GM12878 (cell line): ENCODE measurements at regions of chr15 and their contacts with region 1.

Region 1: GRCh38 chr15:58924327-58924726 is 9.2 kb downstream of the SLTM start:
- DNase-seq: no peak
- ATAC-seq: no peak
- H3K4me3 ChIP-seq: peak overlapping the region; percentile 7; the same call in 1 of the 2 replicates
- H3K27ac ChIP-seq: peak overlapping the region; percentile 14; the same call in 1 of the 2 replicates
- H3K4me1 ChIP-seq: peaks cover 2% of the 10 kb centered on the region; the same call in 1 of the 2 replicates
- H3K27me3 ChIP-seq: no peaks in the 10 kb centered on the region
- CTCF ChIP-seq: no peak
- EP300 ChIP-seq: no peak
- POLR2A ChIP-seq: no peak
- RAD21 ChIP-seq: no peak

Region 2: DNA sequence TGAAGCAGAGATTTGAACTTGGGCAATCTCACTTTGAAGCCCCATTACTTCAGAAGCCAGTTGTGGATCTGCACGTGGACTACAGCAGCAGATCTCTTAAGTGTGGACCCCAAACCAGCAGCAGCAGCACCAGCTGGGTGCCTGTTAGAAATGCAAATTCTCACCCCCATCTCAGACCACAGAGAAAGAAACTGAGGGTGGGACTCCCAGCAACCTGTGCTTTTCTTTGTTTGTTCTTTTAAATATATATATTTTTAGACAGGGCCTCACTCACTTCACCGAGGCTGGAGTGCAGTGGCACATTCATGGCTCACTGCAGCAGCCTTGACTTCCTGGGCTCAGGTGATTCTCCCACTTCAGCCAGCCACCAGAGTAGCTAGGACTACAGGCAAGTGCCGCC is 44.0 kb before region 1 on chr15:
- CTCF ChIA-PET with region 1: no interaction called
- POLR2A ChIA-PET with region 1: interaction called, 10 read pairs
- RAD21 ChIA-PET with region 1: no interaction called
- SMC1A ChIA-PET with region 1: no interaction called
- in situ Hi-C with region 1: no loop called
- intact Hi-C with region 1: no loop called
- DNase-seq: peak; percentile 13
- ATAC-seq: peak; percentile 39
- H3K4me3 ChIP-seq: no peak overlapping the region
- H3K27ac ChIP-seq: peak overlapping the region; percentile 61
- H3K4me1 ChIP-seq: peaks cover 8% of the 10 kb centered on the region
- H3K27me3 ChIP-seq: no peaks in the 10 kb centered on the region
- CTCF ChIP-seq: no peak
- EP300 ChIP-seq: no peak
- POLR2A ChIP-seq: no peak
- RAD21 ChIP-seq: no peak